Activated CD8-positive, alpha-beta T cell treated with anti-CD3 and anti-CD28 coated beads for 36 hours (primary cell): ENCODE measurements at regions of chr1 and their contacts with region 1.

Region 1: GRCh38 chr1:89692601-89693521 is 59.9 kb downstream of the LRRC8C start:
- DNase-seq: peak; percentile 41
- ATAC-seq: peak; percentile 47
- H3K4me3 Mint-ChIP-seq: peak overlapping the region; percentile 3
- H3K27ac Mint-ChIP-seq: peak overlapping the region; percentile 84
- H3K4me1 Mint-ChIP-seq: peaks cover 83% of the 10 kb centered on the region
- H3K27me3 Mint-ChIP-seq: no peaks in the 10 kb centered on the region
- CTCF ChIP-seq: no peak

Region 2: DNA sequence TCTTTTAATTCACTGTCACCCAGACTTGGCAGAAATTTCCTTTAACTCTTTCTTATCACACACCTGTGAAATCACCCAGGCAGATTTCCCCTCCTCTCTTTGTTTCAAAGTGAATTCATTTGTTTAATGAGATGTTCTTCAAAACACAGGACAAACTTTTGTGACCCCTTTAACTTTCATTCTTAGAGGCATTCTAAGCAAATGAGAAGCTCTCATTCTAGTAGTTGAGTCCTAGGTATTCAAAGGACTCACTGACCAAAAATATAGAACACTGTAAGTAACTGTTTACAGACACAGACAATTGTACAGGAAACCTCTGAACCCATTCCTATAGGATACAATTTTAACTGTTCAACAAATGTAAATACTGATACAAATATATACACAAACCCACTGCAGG is 43.1 kb before region 1 on chr1:
- CTCF ChIA-PET with region 1: interaction called, 4 read pairs
- POLR2A ChIA-PET with region 1: no interaction called
- intact Hi-C with region 1: loop called (anchors 5 kb)
- DNase-seq: no peak
- ATAC-seq: peak; percentile 32
- H3K4me3 Mint-ChIP-seq: no peak overlapping the region
- H3K27ac Mint-ChIP-seq: peak overlapping the region; percentile 85
- H3K4me1 Mint-ChIP-seq: peaks cover 73% of the 10 kb centered on the region
- H3K27me3 Mint-ChIP-seq: no peaks in the 10 kb centered on the region
- CTCF ChIP-seq: no peak